HepG2 (cell line): ENCODE measurements at regions of chr10 and their contacts with region 1.

Region 1: GRCh38 chr10:16941870-16942269 is 124.6 kb upstream of the RSU1 start:
- DNase-seq: no peak
- ATAC-seq: no peak
- H3K4me3 ChIP-seq: no peak overlapping the region
- H3K27ac ChIP-seq: no peak overlapping the region
- H3K4me1 ChIP-seq: no peaks in the 10 kb centered on the region
- H3K27me3 ChIP-seq: no peaks in the 10 kb centered on the region
- CTCF ChIP-seq: no peak
- EP300 ChIP-seq: no peak
- POLR2A ChIP-seq: no peak
- RAD21 ChIP-seq: no peak

Region 2: GRCh38 chr10:16968416-16969041 is 26.7 kb after region 1 on chr10:
- CTCF ChIA-PET with region 1: no interaction called
- POLR2A ChIA-PET with region 1: no interaction called
- in situ Hi-C with region 1: no loop called
- intact Hi-C with region 1: loop called (anchors 1 kb)
- DNase-seq: peak; percentile 40
- ATAC-seq: peak; percentile 54; the same call in 2 of the 3 replicates
- H3K4me3 ChIP-seq: no peak overlapping the region
- H3K27ac ChIP-seq: no peak overlapping the region
- H3K4me1 ChIP-seq: no peaks in the 10 kb centered on the region
- H3K27me3 ChIP-seq: no peaks in the 10 kb centered on the region
- CTCF ChIP-seq: no peak
- EP300 ChIP-seq: no peak
- POLR2A ChIP-seq: no peak
- RAD21 ChIP-seq: no peak